ENCODE measurements at regions of chr1 and their contacts with region 1.

Region 1: DNA sequence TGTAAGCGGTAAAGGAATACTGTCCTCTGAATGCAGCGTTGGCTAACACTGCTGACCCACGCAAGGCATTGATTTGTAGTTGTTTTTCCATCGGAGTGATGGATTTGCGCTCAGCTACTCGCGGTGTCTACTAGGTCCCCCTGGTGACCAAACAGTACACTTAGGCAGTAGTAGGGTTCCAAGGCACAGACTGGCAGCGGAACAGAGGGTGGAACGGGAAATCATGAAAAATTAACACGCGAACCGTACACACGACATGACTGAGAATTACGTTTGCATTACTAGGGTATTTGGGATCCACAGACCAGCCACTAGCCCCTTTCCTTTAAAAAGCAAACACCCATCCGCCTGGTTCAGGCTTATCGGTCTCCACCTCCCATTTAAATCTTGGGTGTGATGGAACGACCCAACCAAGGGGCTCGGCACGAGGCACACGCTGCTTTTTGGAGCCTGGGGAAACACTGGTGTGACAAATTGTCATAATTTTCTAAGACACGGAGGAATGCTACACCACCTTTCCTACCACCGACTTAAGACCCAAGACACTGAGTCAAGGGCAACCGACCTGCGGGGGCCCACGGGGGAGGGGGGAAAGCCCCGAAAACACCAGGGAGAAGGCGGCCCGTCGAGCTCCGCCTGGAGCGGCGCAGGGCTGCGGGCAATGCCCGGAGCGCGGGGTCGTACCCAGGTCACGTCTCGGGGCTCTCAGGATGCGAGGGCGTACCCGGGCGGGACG is 699 bp downstream of the DIPK1A start:
- DNase-seq: peak; percentile 42 to 86 (median 58)
- ATAC-seq: peak; percentile 43 to 57 (median 49)
- H3K4me3 ChIP-seq: peak overlapping the region; percentile 78 to 81
- H3K4me3 Mint-ChIP-seq: peak overlapping the region in 2 of 3 donors; percentile 89 to 95
- H3K27ac ChIP-seq: peak overlapping the region; percentile 84
- H3K27ac Mint-ChIP-seq: peak overlapping the region; percentile 95 to 97
- H3K4me1 ChIP-seq: peaks cover 51 to 60% of the 10 kb centered on the region in 2 experiments
- H3K4me1 Mint-ChIP-seq: peaks cover 39 to 46% (median 44%) of the 10 kb centered on the region in 3 donors
- H3K27me3 ChIP-seq: no peaks in the 10 kb centered on the region
- H3K27me3 Mint-ChIP-seq: no peaks in the 10 kb centered on the region

Region 2: DNA sequence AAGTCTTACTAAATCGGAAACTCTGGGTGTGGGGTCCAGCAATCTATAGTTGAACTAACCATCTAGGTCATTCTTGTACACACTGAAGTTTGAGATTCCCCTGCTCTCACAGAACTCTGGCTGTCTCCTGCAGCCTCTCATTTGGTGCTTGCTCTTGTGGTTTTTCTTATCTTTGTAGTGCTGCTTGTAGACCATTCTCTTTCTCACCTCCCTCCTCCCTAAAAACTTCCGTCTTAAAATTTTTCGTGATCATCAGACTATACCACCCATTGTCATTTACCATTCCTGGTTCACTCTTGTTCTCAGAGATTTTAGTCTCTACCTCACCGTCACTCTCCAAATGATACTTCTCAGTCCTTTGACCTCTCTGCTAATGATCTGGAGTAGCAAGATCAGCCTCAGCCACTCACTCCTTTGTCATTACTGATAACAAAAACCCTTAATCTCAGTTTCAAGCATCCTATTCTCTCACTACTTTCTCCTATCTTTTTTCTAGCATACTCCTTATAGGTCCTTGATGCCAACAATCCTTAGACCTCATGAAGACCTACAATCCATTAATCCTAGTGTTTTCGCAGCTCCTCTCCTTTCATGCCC is 943.7 kb before region 1 on chr1:
- CTCF ChIA-PET with region 1: no interaction called
- POLR2A ChIA-PET with region 1: no interaction called
- DNase-seq: peak in 1 of 35 experiments; percentile 28
- ATAC-seq: peak; percentile 50 to 86 (median 64)
- H3K4me3 ChIP-seq: no peak overlapping the region
- H3K4me3 Mint-ChIP-seq: peak overlapping the region in 2 of 3 donors; percentile 5 to 9
- H3K27ac ChIP-seq: peak overlapping the region; percentile 42
- H3K27ac Mint-ChIP-seq: peak overlapping the region; percentile 13 to 84
- H3K4me1 ChIP-seq: peaks cover 5 to 10% of the 10 kb centered on the region in 2 experiments
- H3K4me1 Mint-ChIP-seq: peaks cover 15 to 17% (median 17%) of the 10 kb centered on the region in 3 donors
- H3K27me3 ChIP-seq: peaks cover 0 to 4% of the 10 kb centered on the region in 2 experiments
- H3K27me3 Mint-ChIP-seq: peaks cover 0 to 1% of the 10 kb centered on the region in 2 donors

Region 3: GRCh38 chr1:92858564-92859399 is 101.8 kb before region 1 on chr1:
- CTCF ChIA-PET with region 1: interaction called, 29 to 73 read pairs
- POLR2A ChIA-PET with region 1: interaction called in 1 of 2 experiments, 15 read pairs
- DNase-seq: peak in 30 of 35 experiments; percentile 3 to 87 (median 40)
- ATAC-seq: peak; percentile 88 to 93 (median 91)
- H3K4me3 ChIP-seq: no peak overlapping the region
- H3K4me3 Mint-ChIP-seq: peak overlapping the region; percentile 44 to 57 (median 49)
- H3K27ac ChIP-seq: no peak overlapping the region
- H3K27ac Mint-ChIP-seq: peak overlapping the region; percentile 59 to 82
- H3K4me1 ChIP-seq: peaks cover 7 to 8% of the 10 kb centered on the region in 2 experiments
- H3K4me1 Mint-ChIP-seq: peaks cover 20 to 27% (median 23%) of the 10 kb centered on the region in 3 donors
- H3K27me3 ChIP-seq: no peaks in the 10 kb centered on the region
- H3K27me3 Mint-ChIP-seq: no peaks in the 10 kb centered on the region

Region 4: DNA sequence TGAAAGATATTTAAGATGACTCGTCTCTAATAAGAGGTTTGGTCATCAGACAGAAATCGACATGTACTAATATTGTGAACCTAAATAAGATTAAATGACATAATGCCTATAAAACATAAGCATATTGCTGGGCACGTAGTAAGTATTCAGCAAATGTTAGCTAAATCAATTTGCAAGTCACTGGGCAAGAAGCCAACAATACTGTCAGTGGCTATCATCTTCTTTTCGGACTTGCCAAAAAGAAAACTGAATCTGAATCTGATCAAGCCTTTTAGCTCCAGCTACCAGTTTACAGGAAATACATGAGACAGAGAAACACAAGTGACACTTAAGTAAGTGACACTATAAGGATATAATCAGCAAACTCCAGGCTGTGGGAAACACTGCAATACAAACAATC is 82.8 kb before region 1 on chr1:
- CTCF ChIA-PET with region 1: interaction called in 1 of 2 experiments, 15 read pairs
- POLR2A ChIA-PET with region 1: no interaction called
- DNase-seq: peak in 1 of 35 experiments; percentile 48
- ATAC-seq: peak in 3 of 4 experiments; percentile 26 to 39 (median 33)
- H3K4me3 ChIP-seq: no peak overlapping the region
- H3K4me3 Mint-ChIP-seq: peak overlapping the region; percentile 6 to 53 (median 11)
- H3K27ac ChIP-seq: peak overlapping the region; percentile 43
- H3K27ac Mint-ChIP-seq: peak overlapping the region; percentile 71 to 89
- H3K4me1 ChIP-seq: peaks cover 11 to 31% of the 10 kb centered on the region in 2 experiments
- H3K4me1 Mint-ChIP-seq: peaks cover 36 to 41% (median 39%) of the 10 kb centered on the region in 3 donors
- H3K27me3 ChIP-seq: no peaks in the 10 kb centered on the region
- H3K27me3 Mint-ChIP-seq: no peaks in the 10 kb centered on the region

Region 5: DNA sequence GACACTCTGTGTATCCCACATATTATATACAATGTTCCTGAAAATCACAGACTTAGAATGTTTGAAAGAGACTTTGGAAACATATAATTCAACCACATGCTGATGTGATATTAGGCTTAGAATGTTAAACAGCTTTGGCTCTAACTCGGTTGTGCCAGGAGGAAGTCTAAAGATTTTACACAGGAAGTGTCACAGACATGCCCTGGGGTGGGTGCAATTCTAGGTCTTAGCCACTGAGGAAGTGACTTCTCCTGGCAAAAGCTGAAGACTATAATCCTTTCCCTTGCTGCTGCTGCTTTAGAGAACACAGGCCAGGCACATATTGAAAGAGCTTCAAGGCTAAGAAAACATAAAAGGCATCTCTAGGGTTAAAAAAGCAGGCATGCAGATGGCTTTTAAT is 77.7 kb before region 1 on chr1:
- CTCF ChIA-PET with region 1: interaction called, 3 to 15 read pairs
- POLR2A ChIA-PET with region 1: no interaction called
- DNase-seq: peak in 33 of 35 experiments; percentile 19 to 73 (median 43)
- ATAC-seq: peak; percentile 94 to 98 (median 96)
- H3K4me3 ChIP-seq: no peak overlapping the region
- H3K4me3 Mint-ChIP-seq: peak overlapping the region; percentile 14 to 53 (median 39)
- H3K27ac ChIP-seq: peak overlapping the region; percentile 60
- H3K27ac Mint-ChIP-seq: peak overlapping the region; percentile 94 to 97
- H3K4me1 ChIP-seq: peaks cover 23 to 29% of the 10 kb centered on the region in 2 experiments
- H3K4me1 Mint-ChIP-seq: peaks cover 47 to 53% (median 52%) of the 10 kb centered on the region in 3 donors
- H3K27me3 ChIP-seq: no peaks in the 10 kb centered on the region
- H3K27me3 Mint-ChIP-seq: no peaks in the 10 kb centered on the region

Region 6: DNA sequence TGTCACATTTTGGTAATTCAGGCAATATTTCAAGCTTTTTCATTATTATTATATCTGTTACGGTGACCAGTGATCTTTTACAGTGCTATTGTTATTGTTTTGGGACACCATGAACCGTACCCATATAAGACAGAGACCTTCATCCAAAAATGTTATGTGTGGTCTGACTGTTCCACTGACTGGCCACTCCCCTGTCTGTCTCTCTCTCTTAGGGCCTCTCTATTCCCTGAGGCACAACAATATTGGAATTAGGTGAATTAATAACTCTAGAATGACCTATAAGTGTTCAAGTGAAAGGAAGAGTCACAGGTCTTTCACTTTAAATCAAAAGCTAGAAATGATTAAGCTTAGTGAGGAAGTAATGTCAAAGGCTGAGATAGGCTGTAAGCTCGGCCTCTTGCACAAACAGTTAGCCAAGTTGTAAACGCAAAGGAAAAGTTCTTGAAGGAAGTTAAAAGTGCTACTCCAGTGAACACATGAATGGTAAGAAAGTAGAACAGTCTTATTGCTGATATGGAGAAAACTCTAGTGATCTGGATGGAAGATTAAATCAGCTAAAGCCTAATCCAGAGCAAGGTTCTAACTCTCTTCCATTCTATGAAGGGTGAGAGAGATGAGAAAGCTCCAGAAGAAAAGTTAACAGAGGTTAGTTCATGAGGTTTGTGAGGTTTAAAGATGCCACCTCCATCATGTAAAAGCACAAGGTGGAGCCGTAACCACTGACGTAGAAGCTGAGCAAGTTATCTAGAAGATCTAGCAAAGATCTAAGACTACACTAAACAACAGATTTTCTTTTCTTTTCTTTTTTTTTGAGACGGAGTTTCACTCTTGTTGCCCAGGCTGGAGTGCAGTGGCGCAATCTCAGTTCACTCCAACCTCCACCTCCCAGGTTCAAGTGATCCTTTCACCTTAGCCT is 20.4 kb after region 1 on chr1:
- CTCF ChIA-PET with region 1: interaction called, 13 to 72 read pairs
- POLR2A ChIA-PET with region 1: interaction called, 15 to 44 read pairs
- DNase-seq: peak in 33 of 35 experiments; percentile 35 to 90 (median 68)
- ATAC-seq: peak; percentile 90 to 98 (median 94)
- H3K4me3 ChIP-seq: peak overlapping the region in 1 of 2 donors; percentile 6
- H3K4me3 Mint-ChIP-seq: peak overlapping the region; percentile 25 to 63 (median 58)
- H3K27ac ChIP-seq: peak overlapping the region; percentile 94
- H3K27ac Mint-ChIP-seq: peak overlapping the region; percentile 96 to 100
- H3K4me1 ChIP-seq: peaks cover 9 to 29% of the 10 kb centered on the region in 2 experiments
- H3K4me1 Mint-ChIP-seq: peaks cover 38 to 47% (median 46%) of the 10 kb centered on the region in 3 donors
- H3K27me3 ChIP-seq: no peaks in the 10 kb centered on the region
- H3K27me3 Mint-ChIP-seq: no peaks in the 10 kb centered on the region

Region 7: GRCh38 chr1:93447516-93448291 is 487.1 kb after region 1 on chr1 and contains the start of gene FNBP1L:
- CTCF ChIA-PET with region 1: no interaction called
- POLR2A ChIA-PET with region 1: interaction called in 1 of 2 experiments, 19 read pairs
- DNase-seq: peak in 34 of 35 experiments; percentile 3 to 70 (median 44)
- ATAC-seq: peak; percentile 79 to 92 (median 86)
- H3K4me3 ChIP-seq: peak within 1 kb of the TSS; percentile 61 to 92
- H3K4me3 Mint-ChIP-seq: peak within 1 kb of the TSS; percentile 91 to 95 (median 92)
- H3K27ac ChIP-seq: no peak within 1 kb of the TSS
- H3K27ac Mint-ChIP-seq: peak within 1 kb of the TSS; percentile 66 to 69
- H3K4me1 ChIP-seq: peaks cover 8 to 22% of the 10 kb centered on the region in 2 experiments
- H3K4me1 Mint-ChIP-seq: peaks cover 15 to 24% (median 20%) of the 10 kb centered on the region in 3 donors
- H3K27me3 ChIP-seq: peaks cover 2 to 35% of the 10 kb centered on the region in 2 experiments
- H3K27me3 Mint-ChIP-seq: peaks cover 27 to 46% of the 10 kb centered on the region in 2 donors
- total RNA-seq, gene FNBP1L: 1.2 to 3.2 (median 1.6) TPM

Region 8: GRCh38 chr1:94417978-94418663 is 1457.6 kb after region 1 on chr1 and contains the start of gene ABCD3:
- CTCF ChIA-PET with region 1: interaction called in 1 of 2 experiments, 12 read pairs
- POLR2A ChIA-PET with region 1: no interaction called
- DNase-seq: peak; percentile 92 to 98 (median 96)
- ATAC-seq: peak; percentile 91 to 96 (median 92)
- H3K4me3 ChIP-seq: peak within 1 kb of the TSS; percentile 78 to 83
- H3K4me3 Mint-ChIP-seq: no peak within 1 kb of the TSS
- H3K27ac ChIP-seq: peak within 1 kb of the TSS; percentile 92
- H3K27ac Mint-ChIP-seq: peak within 1 kb of the TSS; percentile 29 to 81
- H3K4me1 ChIP-seq: peaks cover 15 to 29% of the 10 kb centered on the region in 2 experiments
- H3K4me1 Mint-ChIP-seq: peaks cover 39 to 41% (median 41%) of the 10 kb centered on the region in 3 donors
- H3K27me3 ChIP-seq: no peaks in the 10 kb centered on the region
- H3K27me3 Mint-ChIP-seq: no peaks in the 10 kb centered on the region
- total RNA-seq, gene ABCD3: 17.3 to 29.9 (median 24.2) TPM